Activated B cell treated with CpG ODN at 0.5 μM for 24 hours (primary cell): ENCODE measurements at regions of chr9 and their contacts with region 1.

Region 1: DNA sequence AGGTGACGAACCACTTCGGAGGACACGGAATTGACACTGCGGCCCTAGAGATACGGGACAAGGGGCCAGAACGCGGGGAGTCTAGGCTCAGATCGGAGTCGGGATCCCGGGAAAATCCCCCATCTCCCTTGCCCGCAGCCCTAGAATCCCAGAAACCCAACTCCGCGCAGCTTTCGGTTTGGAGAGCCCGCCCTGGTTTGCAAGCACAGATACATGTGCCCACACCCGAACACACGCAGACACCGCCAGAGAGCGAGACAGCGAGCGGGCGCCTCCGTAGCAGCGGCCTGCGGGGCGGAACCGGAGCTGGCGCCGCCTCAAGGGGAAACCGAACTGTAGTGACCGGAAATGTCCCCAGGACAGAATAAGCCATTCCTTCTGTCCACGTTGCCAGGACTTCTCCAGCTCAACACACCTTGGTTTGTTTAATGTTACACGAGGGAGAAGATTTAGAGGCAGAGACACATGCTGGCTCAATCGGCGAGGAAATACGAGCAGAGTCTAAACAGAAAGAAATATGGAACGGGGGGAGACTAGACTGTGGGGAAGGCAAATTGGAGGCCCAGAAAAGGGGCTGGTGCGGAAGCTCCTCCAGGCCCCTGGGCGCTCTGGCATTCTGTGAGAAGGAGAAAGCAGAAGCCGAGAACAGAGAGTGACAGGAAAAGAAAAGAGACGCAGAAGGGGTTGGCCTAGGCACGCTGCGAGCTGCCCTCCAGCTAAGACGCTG is 2.9 kb upstream of the PAX5 start:
- DNase-seq: peak; percentile 65
- ATAC-seq: peak; percentile 31
- H3K4me3 Mint-ChIP-seq: peak overlapping the region; percentile 90
- H3K27ac Mint-ChIP-seq: peak overlapping the region; percentile 96
- H3K4me1 Mint-ChIP-seq: peaks cover 65% of the 10 kb centered on the region
- H3K27me3 Mint-ChIP-seq: no peaks in the 10 kb centered on the region
- CTCF ChIP-seq: no peak

Region 2: GRCh38 chr9:36995927-36996705 is 40.8 kb before region 1 on chr9:
- CTCF ChIA-PET with region 1: interaction called, 7 read pairs
- POLR2A ChIA-PET with region 1: interaction called, 119 read pairs
- intact Hi-C with region 1: no loop called
- DNase-seq: peak; percentile 56
- ATAC-seq: peak; percentile 29
- H3K4me3 Mint-ChIP-seq: peak overlapping the region; percentile 47
- H3K27ac Mint-ChIP-seq: peak overlapping the region; percentile 97
- H3K4me1 Mint-ChIP-seq: peaks cover 96% of the 10 kb centered on the region
- H3K27me3 Mint-ChIP-seq: no peaks in the 10 kb centered on the region
- CTCF ChIP-seq: no peak

Region 3: DNA sequence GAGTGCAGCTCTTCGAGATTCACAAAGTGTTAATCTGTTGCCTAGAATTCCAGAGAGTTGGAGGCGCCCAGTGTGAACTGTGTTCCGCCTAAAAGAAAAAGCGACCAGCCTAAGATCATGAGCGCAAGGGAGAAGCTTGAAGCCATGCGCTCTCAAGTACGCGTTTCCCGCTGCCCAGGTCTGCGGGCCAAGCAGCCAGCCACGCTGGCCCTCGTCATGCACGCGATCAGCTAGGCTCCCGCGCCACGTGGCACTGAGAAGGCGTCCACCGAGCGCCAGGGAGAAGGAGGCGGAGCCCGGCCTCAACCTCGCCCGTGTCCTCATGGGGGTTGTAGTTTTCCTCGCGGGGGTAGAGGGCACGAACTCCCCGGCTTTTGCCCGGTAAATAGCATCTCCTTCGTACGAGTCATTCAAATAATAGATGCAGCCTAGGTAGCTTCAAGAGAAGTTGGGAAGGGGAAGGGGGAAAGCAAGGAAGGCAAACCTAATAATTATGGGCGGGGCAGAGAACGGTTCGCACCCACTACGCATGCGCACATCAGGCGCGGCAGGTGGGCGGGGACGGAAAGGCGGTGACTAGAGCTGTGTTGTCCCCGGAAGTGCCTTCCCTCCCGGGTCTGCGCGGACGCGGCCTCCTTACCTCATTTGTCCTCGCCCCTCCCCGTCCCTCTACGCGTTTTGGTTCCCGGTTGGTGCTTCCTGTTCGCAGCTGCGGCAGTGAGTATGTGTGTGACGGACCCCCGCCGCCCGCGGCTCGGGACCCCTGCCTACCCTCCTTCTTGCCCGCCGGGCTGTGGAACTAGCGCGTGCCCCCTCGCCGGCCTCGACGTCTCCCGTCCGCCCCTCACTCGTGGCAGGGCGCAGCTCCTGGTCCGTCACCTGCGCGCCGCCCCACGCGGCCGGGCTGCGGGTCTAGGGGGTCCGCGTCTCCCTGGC is 83.2 kb after region 1 on chr9 and contains the start of gene ZCCHC7:
- CTCF ChIA-PET with region 1: interaction called, 8 read pairs
- POLR2A ChIA-PET with region 1: interaction called, 148 read pairs
- intact Hi-C with region 1: loop called (anchors 1 kb)
- DNase-seq: peak; percentile 93
- ATAC-seq: peak; percentile 94
- H3K4me3 Mint-ChIP-seq: peak within 1 kb of the TSS; percentile 99
- H3K27ac Mint-ChIP-seq: peak within 1 kb of the TSS; percentile 96
- H3K4me1 Mint-ChIP-seq: peaks cover 46% of the 10 kb centered on the region
- H3K27me3 Mint-ChIP-seq: no peaks in the 10 kb centered on the region
- CTCF ChIP-seq: no peak
- total RNA-seq, gene ZCCHC7: 70.3 and 70.8 TPM in 2 replicates

Region 4: DNA sequence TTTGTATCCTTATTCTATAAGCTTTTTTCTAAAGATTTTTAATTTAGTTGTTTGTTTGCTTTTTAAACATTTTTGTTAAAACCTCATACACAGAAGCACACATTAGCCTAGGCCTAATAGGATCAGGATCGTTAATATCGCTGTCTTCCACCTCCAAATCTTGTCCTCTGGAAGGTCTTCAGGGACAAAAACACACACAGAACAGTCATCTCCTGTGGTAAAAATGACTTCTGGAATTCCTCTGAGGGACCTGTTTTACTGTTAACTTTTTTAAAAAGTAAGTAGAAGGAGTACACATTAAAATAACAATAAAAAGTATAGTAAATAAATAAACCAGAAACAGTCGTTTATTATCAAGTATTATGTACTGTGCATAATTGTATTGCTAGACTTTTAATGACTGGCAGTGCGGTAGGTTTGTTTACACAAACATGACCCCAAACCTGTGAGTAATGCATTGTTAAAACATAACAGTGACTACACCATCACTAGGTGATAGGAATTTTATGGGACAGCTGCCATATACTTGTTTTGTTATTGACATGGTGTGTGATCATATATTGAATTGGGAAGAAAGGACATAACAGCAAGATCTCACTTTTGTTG is 193.0 kb after region 1 on chr9:
- CTCF ChIA-PET with region 1: no interaction called
- POLR2A ChIA-PET with region 1: no interaction called
- intact Hi-C with region 1: no loop called
- DNase-seq: no peak
- ATAC-seq: no peak
- H3K4me3 Mint-ChIP-seq: no peak overlapping the region
- H3K27ac Mint-ChIP-seq: no peak overlapping the region
- H3K4me1 Mint-ChIP-seq: peaks cover 47% of the 10 kb centered on the region
- H3K27me3 Mint-ChIP-seq: no peaks in the 10 kb centered on the region
- CTCF ChIP-seq: no peak

Region 5: GRCh38 chr9:37293664-37294524 is 257.0 kb after region 1 on chr9:
- CTCF ChIA-PET with region 1: interaction called, 4 read pairs
- POLR2A ChIA-PET with region 1: interaction called, 79 read pairs
- intact Hi-C with region 1: no loop called
- DNase-seq: no peak
- ATAC-seq: peak; percentile 69
- H3K4me3 Mint-ChIP-seq: peak overlapping the region; percentile 67
- H3K27ac Mint-ChIP-seq: peak overlapping the region; percentile 97
- H3K4me1 Mint-ChIP-seq: peaks cover 95% of the 10 kb centered on the region
- H3K27me3 Mint-ChIP-seq: no peaks in the 10 kb centered on the region
- CTCF ChIP-seq: no peak

Region 6: GRCh38 chr9:37329576-37329975 is 292.6 kb after region 1 on chr9:
- CTCF ChIA-PET with region 1: interaction called, 25 read pairs
- POLR2A ChIA-PET with region 1: interaction called, 124 read pairs
- intact Hi-C with region 1: loop called (anchors 1 kb)
- DNase-seq: no peak
- ATAC-seq: peak; percentile 47
- H3K4me3 Mint-ChIP-seq: peak overlapping the region; percentile 33
- H3K27ac Mint-ChIP-seq: peak overlapping the region; percentile 83
- H3K4me1 Mint-ChIP-seq: peaks cover 71% of the 10 kb centered on the region
- H3K27me3 Mint-ChIP-seq: no peaks in the 10 kb centered on the region
- CTCF ChIP-seq: no peak

Region 7: DNA sequence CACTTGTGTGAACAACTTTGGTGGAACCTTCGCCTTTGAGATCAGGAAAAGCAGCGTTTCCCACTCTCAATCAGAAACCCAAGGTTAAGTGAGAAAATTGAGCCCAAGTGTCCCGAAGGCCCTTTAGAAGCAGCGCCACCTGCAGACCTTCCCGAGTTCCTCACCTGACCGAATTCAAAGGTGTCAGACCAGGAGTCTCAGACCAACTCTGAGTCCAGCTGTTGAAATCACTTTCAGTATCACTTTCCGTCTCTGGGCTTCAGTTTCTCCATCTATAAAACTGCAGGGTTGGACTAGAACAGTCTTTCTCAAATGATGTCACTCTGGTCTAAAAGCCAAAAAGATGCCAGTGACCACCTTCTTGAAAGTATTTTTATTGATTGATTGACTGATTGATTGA is 353.8 kb after region 1 on chr9:
- CTCF ChIA-PET with region 1: no interaction called
- POLR2A ChIA-PET with region 1: interaction called, 16 read pairs
- intact Hi-C with region 1: no loop called
- DNase-seq: no peak
- ATAC-seq: peak; percentile 54
- H3K4me3 Mint-ChIP-seq: peak overlapping the region; percentile 4
- H3K27ac Mint-ChIP-seq: peak overlapping the region; percentile 86
- H3K4me1 Mint-ChIP-seq: peaks cover 66% of the 10 kb centered on the region
- H3K27me3 Mint-ChIP-seq: no peaks in the 10 kb centered on the region
- CTCF ChIP-seq: no peak

Region 8: GRCh38 chr9:37485389-37486219 is 448.7 kb after region 1 on chr9 and contains the start of gene POLR1E:
- CTCF ChIA-PET with region 1: no interaction called
- POLR2A ChIA-PET with region 1: interaction called, 3 read pairs
- intact Hi-C with region 1: loop called (anchors 5 kb)
- DNase-seq: peak; percentile 99
- ATAC-seq: peak; percentile 98
- H3K4me3 Mint-ChIP-seq: peak within 1 kb of the TSS; percentile 92
- H3K27ac Mint-ChIP-seq: peak within 1 kb of the TSS; percentile 85
- H3K4me1 Mint-ChIP-seq: peaks cover 31% of the 10 kb centered on the region
- H3K27me3 Mint-ChIP-seq: no peaks in the 10 kb centered on the region
- CTCF ChIP-seq: no peak
- total RNA-seq, gene POLR1E: 45.4 and 46.3 TPM in 2 replicates

Region 9: DNA sequence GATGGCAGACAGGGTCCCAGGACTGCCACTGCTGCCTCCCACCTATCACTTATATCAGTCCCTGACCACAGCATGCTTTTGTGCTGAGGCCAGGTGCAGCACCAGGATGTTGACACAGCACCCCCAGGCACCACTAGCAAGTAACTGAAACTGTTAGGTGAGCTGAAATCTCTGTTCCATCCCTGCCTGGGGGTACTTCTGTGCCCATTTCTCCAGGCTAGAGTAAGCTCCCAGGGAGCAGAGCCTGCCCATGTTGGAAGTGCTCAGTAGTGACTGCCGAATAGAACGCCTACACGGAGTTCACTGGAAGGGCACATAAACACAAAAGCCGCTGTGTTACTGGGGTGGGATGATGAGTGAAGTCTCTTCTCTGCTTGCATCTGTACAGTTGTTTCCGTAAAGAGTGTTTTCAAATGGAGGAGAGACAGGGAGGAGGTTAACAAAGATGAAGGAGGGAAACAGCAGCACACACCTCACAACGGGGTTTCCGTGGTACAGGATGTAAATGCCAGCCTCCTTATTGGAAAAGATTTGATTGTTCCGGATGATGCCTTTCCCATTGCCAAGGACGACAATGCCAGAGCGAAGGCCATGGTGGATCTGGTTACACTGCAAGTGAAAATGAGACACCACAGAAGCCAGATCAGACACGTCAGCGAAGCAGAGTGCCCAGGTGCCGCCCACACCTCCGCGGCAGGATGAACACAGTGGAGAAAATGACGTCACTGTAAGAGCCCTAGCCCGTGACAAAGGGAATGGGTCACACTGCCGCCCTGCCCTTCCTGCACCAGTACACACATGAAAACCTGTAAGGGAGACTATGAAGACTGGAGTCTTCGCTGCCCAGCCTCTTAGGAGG is 491.9 kb after region 1 on chr9:
- CTCF ChIA-PET with region 1: no interaction called
- POLR2A ChIA-PET with region 1: no interaction called
- intact Hi-C with region 1: no loop called
- DNase-seq: peak; percentile 43
- ATAC-seq: peak; percentile 72
- H3K4me3 Mint-ChIP-seq: peak overlapping the region; percentile 57
- H3K27ac Mint-ChIP-seq: peak overlapping the region; percentile 76
- H3K4me1 Mint-ChIP-seq: peaks cover 38% of the 10 kb centered on the region
- H3K27me3 Mint-ChIP-seq: no peaks in the 10 kb centered on the region
- CTCF ChIP-seq: no peak